Left ventricle myocardium superior (tissue), 1 donor: ENCODE measurements at regions of chr2 and their contacts with region 1.

Region 1: GRCh38 chr2:230007931-230008707 is 60.6 kb downstream of the SLC16A14 start:
- DNase-seq: peak; percentile 83
- ATAC-seq: peak; percentile 68

Region 2: GRCh38 chr2:230166557-230167170 is 158.5 kb after region 1 on chr2:
- intact Hi-C with region 1: loop called (anchors 5 kb)
- DNase-seq: no peak
- ATAC-seq: no peak

Region 3: DNA sequence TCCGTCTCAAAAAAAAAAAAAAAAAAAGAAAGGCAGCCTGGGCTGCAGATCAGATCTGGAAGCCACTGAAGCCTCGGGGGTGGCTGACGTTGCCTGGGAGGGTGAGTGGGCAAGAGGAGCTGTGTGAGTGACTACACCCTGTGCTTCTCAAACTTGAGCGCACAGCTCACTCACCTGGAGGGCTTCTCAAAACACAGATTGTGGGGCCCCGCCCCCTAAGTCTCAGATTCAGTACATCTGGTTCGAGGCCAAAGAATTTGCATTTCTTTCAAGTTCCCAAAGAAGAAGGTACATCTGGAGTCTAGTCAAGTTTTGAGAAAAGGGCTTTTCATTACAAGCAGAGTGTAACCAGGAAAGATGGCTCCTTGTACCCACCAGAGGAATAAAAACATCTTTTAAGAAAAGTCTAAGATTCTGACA is 606.8 kb after region 1 on chr2:
- intact Hi-C with region 1: loop called (anchors 2 kb)
- DNase-seq: no peak
- ATAC-seq: no peak